ENCODE measurements at regions of chr14 and their contacts with region 1.

Region 1: GRCh38 chr14:87805315-87805723 is 187.7 kb downstream of the GALC start:
- DNase-seq: peak; percentile 77
- ATAC-seq: peak; percentile 72
- H3K4me3 Mint-ChIP-seq: no peak overlapping the region
- H3K27ac Mint-ChIP-seq: no peak overlapping the region
- H3K4me1 Mint-ChIP-seq: no peaks in the 10 kb centered on the region
- H3K27me3 Mint-ChIP-seq: peaks cover 7% of the 10 kb centered on the region

Region 2: DNA sequence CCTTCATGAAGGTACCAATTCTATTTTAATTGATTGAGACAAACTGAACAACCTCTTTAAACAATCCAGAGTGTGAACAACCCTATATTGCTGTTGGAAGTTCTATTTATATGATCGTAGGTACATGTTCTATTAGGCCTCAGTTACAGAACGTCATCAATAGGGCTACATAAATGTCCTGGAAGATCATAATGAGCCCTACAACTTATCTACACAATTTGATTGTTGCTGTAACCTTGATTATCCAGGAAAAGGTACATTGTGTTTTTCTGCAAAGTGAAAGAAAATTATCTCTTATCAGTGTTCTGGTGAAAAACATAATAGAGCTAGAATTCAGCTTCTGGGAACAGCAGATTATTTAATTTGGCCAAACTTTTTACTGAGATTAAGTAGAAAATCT is 425.3 kb before region 1 on chr14:
- CTCF ChIA-PET with region 1: no interaction called
- POLR2A ChIA-PET with region 1: no interaction called
- intact Hi-C with region 1: no loop called
- DNase-seq: no peak
- ATAC-seq: no peak
- H3K4me3 Mint-ChIP-seq: no peak overlapping the region
- H3K27ac Mint-ChIP-seq: no peak overlapping the region
- H3K4me1 Mint-ChIP-seq: no peaks in the 10 kb centered on the region
- H3K27me3 Mint-ChIP-seq: no peaks in the 10 kb centered on the region

Region 3: DNA sequence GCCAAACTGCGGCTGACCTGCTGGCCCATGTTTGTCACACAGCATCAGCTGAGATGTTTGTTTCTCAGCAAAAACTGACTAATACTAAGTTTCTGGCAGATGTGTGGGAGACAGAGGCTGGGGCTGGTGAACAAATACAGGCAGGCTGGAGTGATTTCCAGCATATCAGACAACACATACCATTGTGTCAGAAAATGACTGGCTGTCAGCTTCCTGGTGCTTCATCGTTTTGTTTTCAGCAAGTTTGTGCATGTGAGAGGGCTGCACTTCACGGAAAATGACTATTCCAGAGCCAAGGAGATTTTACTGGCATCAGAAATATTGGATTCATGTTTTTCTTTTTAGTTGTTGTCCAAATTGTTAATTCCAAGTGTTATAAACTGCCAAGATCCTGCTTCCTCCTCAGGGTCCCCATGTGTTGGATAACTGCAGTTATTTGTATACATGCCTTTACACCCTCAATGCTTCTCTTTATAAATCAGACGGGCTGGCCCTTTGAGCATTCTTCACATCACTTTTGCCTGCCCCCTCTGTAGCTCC is 42.0 kb after region 1 on chr14:
- CTCF ChIA-PET with region 1: interaction called, 11 read pairs
- POLR2A ChIA-PET with region 1: no interaction called
- intact Hi-C with region 1: no loop called
- DNase-seq: no peak
- ATAC-seq: no peak
- H3K4me3 Mint-ChIP-seq: no peak overlapping the region
- H3K27ac Mint-ChIP-seq: no peak overlapping the region
- H3K4me1 Mint-ChIP-seq: no peaks in the 10 kb centered on the region
- H3K27me3 Mint-ChIP-seq: peaks cover 15% of the 10 kb centered on the region

Region 4: DNA sequence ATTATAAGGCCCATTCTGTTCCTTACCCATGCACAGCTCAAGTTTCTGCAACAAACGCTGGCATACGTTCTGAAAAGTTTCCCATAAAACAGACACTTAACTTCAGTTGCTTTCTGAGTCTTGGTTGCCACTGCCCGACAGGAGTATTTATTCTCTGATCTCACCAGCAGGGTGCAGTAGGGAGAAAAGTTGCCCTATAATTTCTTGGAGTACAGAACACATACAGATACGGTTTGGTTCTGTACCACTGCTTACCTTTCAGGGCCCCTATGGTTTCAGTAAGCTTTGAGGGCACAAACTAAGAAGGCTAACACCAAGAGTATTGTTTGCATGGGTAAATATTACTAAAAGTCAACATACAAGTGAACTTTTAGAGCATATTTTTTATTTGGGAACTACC is 658.0 kb after region 1 on chr14:
- CTCF ChIA-PET with region 1: no interaction called
- POLR2A ChIA-PET with region 1: no interaction called
- intact Hi-C with region 1: no loop called
- DNase-seq: peak; percentile 21
- ATAC-seq: peak; percentile 36
- H3K4me3 Mint-ChIP-seq: no peak overlapping the region
- H3K27ac Mint-ChIP-seq: no peak overlapping the region
- H3K4me1 Mint-ChIP-seq: no peaks in the 10 kb centered on the region
- H3K27me3 Mint-ChIP-seq: no peaks in the 10 kb centered on the region